Activated CD4-positive, alpha-beta T cell treated with anti-CD3 and anti-CD28 coated beads for 36 hours (primary cell): ENCODE measurements at regions of chr7 and their contacts with region 1.

Region 1: GRCh38 chr7:131071786-131072504 is 255.7 kb upstream of the MKLN1 start:
- DNase-seq: peak; percentile 22
- ATAC-seq: no peak
- H3K4me3 Mint-ChIP-seq: no peak overlapping the region
- H3K27ac Mint-ChIP-seq: peak overlapping the region; percentile 70
- H3K4me1 Mint-ChIP-seq: peaks cover 78% of the 10 kb centered on the region
- H3K27me3 Mint-ChIP-seq: no peaks in the 10 kb centered on the region

Region 2: GRCh38 chr7:131057015-131057793 is 14.7 kb before region 1 on chr7:
- CTCF ChIA-PET with region 1: interaction called, 35 read pairs
- POLR2A ChIA-PET with region 1: interaction called, 6 read pairs
- intact Hi-C with region 1: no loop called
- DNase-seq: no peak
- ATAC-seq: peak; percentile 57
- H3K4me3 Mint-ChIP-seq: peak overlapping the region; percentile 31
- H3K27ac Mint-ChIP-seq: peak overlapping the region; percentile 76
- H3K4me1 Mint-ChIP-seq: peaks cover 64% of the 10 kb centered on the region
- H3K27me3 Mint-ChIP-seq: no peaks in the 10 kb centered on the region

Region 3: DNA sequence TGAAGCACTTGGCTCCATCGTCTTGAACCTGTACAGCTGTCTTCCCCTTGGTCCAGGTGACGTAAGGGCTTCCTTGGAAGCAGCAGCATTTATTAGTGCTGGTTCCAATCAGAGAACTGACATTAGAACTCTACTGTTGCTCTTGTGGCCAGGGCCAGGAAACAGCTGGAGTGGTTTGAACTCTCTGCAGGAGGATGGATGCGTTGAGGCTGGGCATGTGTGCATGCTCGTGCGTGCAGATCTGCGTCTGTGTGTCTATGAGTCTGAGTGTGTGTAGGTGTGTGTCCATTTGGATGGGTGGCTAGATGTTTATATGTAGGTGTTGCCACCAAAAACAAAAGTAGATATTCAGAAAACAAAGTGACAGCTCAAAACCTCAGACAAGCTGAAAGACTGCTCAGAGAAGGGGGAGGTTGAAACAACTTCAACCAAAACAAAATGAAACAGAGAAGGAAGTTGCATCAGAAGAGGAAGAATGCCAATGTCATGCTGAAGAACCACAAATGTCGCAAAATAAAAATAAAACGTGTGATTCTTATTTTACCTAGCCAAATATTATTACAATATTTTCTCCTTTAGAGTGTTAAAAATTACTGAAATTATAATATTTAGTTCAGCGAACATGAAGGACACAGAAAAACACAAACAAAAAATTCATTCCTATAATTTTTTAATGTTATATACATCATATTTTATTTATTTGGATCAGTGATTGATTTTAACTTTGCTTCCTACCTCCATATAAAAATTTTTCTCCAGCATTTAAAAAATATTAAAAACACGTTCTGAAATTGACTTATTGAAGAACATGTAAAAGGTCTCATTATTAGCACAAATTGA is 159.7 kb after region 1 on chr7:
- CTCF ChIA-PET with region 1: interaction called, 5 read pairs
- POLR2A ChIA-PET with region 1: no interaction called
- intact Hi-C with region 1: loop called in 1 of 2 experiments (anchors 5 kb)
- DNase-seq: peak; percentile 77
- ATAC-seq: peak; percentile 72
- H3K4me3 Mint-ChIP-seq: peak overlapping the region; percentile 56
- H3K27ac Mint-ChIP-seq: peak overlapping the region; percentile 93
- H3K4me1 Mint-ChIP-seq: peaks cover 47% of the 10 kb centered on the region
- H3K27me3 Mint-ChIP-seq: no peaks in the 10 kb centered on the region

Region 4: DNA sequence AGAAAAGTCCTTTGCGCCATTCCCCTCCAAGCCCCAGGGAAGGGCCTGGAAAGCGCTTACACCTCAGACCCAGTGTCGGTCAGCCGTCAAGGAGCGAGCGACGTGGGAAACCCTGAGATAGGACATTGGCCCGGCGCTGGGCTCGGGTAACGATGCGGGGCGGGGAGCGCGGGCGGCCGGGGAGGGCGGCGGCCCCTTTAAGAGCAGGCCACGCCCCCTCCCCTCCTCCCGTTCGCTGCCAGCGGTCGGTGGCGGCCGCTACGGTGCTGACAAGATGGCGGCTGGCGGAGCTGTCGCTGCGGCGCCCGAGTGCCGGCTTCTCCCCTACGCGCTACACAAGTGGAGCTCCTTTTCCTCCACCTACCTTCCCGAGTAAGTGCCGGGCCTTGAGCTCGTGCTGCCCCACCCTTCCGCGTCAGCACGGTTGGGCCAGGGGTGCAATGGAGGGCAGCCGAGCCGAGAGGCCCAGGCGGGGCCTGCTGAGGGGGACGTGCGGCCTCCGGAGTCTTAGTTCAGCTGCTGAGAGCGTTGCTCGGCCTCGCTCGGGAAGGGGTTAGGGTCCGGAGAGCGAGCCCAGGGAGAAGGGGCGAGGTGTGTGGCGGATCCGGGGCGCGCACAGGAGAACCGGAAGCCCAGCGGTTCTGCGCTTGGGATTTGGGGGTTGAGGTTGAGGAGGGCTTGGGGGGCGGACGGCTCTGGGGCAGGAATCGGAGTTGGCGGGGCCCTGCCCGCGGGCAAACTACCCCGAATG is 255.9 kb after region 1 on chr7 and contains the start of gene MKLN1:
- CTCF ChIA-PET with region 1: no interaction called
- POLR2A ChIA-PET with region 1: interaction called, 3 read pairs
- intact Hi-C with region 1: loop called (anchors 5 kb)
- DNase-seq: peak; percentile 95
- ATAC-seq: peak; percentile 94
- H3K4me3 Mint-ChIP-seq: peak within 1 kb of the TSS; percentile 94
- H3K27ac Mint-ChIP-seq: peak within 1 kb of the TSS; percentile 97
- H3K4me1 Mint-ChIP-seq: peaks cover 60% of the 10 kb centered on the region
- H3K27me3 Mint-ChIP-seq: no peaks in the 10 kb centered on the region
- total RNA-seq, gene MKLN1: 40.1 to 42.9 TPM

Region 5: DNA sequence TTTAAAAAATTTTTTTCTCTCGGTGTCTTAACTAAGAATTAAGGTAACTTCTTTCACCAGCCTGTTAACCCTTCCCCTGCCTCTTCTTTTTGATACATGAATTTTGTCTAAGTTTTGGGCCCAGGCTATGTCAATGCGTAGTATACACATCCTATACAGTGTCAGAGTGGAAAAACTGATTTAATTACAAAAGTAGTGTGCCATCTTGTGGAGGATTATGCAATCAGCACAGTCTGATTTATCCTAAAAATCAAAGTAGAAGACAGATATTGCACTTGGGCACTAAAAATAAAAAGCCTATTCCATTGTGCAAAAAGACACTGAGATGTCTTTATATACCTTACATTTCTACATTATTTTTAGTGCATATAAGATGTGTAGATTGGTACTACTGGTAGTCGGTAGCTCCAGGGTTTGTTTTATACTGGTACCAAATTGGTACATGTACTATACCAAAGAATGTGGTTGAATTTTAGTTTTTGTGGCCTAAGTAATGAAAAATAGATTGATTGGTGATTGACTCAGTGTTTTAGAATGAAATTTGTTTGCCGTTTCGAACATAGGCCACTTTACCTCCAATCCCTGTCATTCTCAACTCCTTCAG is 352.4 kb after region 1 on chr7:
- CTCF ChIA-PET with region 1: interaction called, 6 read pairs
- POLR2A ChIA-PET with region 1: no interaction called
- intact Hi-C with region 1: loop called (anchors 1 kb)
- DNase-seq: no peak
- ATAC-seq: peak; percentile 92
- H3K4me3 Mint-ChIP-seq: no peak overlapping the region
- H3K27ac Mint-ChIP-seq: no peak overlapping the region
- H3K4me1 Mint-ChIP-seq: peaks cover 8% of the 10 kb centered on the region
- H3K27me3 Mint-ChIP-seq: no peaks in the 10 kb centered on the region